IMR-90 (cell line): ENCODE measurements at regions of chr2 and their contacts with region 1.

Region 1: DNA sequence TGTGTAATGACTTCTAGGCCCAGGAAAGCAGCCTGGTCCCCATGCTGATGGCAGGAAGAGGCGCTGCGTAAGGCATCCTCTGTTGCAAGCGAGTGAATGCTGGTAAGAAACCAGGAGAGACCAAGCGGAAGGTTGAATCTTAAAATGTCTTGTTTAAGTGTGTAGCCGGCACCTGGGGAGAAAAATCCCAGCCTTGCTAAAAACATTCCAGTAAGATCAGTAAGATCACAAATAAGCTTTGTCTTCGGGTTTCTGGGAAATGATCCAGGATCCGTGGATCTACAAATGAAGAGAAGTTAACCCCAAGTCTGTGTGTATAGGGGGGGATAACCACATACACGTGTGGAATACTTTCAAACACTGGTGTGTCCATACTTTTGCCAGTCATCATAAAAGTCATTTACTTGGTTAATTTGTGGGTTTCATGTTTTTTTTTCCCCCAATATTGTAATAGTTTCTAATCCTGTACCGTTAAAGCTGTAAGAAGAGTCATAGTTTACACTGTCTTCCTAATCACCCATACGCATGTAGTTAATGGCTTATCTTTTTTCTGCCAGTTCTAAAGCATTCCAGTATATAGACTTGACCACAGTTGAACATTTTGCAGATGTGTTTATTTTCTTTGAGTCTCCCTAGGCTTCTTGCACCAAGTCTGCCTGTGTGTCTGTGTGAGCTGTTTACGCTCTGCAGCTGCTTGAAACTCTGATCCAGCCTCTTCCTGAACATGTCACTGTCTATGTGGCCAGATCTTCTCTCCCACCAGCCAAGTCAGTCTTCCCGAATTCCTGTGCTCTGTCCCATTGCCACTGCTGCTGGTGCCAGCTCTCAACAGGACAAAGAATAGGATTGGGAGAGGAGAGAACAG is 135.9 kb upstream of the ARL4C start:
- DNase-seq: peak; percentile 100
- ATAC-seq: peak; percentile 91
- H3K4me3 ChIP-seq: no peak overlapping the region
- H3K27ac ChIP-seq: peak overlapping the region; percentile 97
- H3K4me1 ChIP-seq: peaks cover 33% of the 10 kb centered on the region
- H3K27me3 ChIP-seq: no peaks in the 10 kb centered on the region
- CTCF ChIP-seq: no peak
- POLR2A ChIP-seq: peak; percentile 48; the same call in 1 of the 2 replicates
- RAD21 ChIP-seq: no peak; the same call in 1 of the 2 replicates

Region 2: DNA sequence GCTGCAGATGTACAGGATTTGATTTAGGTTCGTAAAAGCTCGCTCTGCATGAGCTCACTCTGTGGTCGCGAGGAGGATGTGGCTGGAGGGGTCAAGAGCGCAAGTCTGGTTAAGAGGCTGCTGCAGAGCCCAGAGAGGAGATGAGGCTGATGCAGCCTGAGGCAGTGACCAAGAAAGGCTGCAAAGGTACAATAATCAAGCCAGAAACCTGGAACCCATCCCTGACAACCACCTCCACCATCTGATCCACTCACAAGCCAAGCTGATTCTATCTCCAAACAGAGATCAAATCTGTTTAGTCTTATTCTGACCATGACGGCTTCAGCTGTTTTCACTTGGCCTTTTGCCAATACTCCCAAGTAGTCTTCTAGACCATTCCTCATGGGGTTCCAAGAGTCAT is 77.0 kb before region 1 on chr2:
- CTCF ChIA-PET with region 1: interaction called, 3 read pairs
- POLR2A ChIA-PET with region 1: no interaction called
- dilution Hi-C with region 1: no loop called
- in situ Hi-C with region 1: loop called (anchors 5 kb)
- intact Hi-C with region 1: no loop called
- DNase-seq: peak; percentile 48
- ATAC-seq: no peak
- H3K4me3 ChIP-seq: no peak overlapping the region
- H3K27ac ChIP-seq: no peak overlapping the region
- H3K4me1 ChIP-seq: peaks cover 7% of the 10 kb centered on the region
- H3K27me3 ChIP-seq: no peaks in the 10 kb centered on the region; the same call in 1 of the 2 replicates
- CTCF ChIP-seq: no peak
- POLR2A ChIP-seq: no peak
- RAD21 ChIP-seq: no peak

Region 3: DNA sequence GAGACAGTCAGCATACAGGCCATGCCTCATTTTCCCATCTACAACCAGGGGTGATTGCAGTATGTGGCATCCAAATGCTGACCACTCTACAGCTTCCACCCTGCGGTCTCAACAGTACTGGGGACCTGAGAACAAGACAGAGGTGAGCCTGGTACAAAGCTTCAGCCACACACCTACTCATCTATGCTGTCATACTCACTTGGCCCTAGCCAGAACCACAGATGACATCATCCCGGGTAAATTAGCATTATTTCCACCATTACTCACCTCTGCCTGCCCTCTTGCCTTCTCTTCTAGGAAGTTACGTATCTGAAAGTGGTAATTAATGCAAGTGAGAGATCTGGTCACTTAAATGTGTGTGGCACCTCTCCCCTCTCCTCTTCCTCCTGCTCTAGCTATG is 72.3 kb after region 1 on chr2:
- CTCF ChIA-PET with region 1: no interaction called
- POLR2A ChIA-PET with region 1: no interaction called
- dilution Hi-C with region 1: no loop called
- in situ Hi-C with region 1: no loop called
- intact Hi-C with region 1: no loop called
- DNase-seq: peak; percentile 85
- ATAC-seq: peak; percentile 63; the same call in 1 of the 2 replicates
- H3K4me3 ChIP-seq: no peak overlapping the region
- H3K27ac ChIP-seq: no peak overlapping the region
- H3K4me1 ChIP-seq: peaks cover 3% of the 10 kb centered on the region; the same call in 1 of the 2 replicates
- H3K27me3 ChIP-seq: no peaks in the 10 kb centered on the region
- CTCF ChIP-seq: no peak
- POLR2A ChIP-seq: no peak
- RAD21 ChIP-seq: no peak

Region 4: GRCh38 chr2:234763002-234763873 is 130.5 kb after region 1 on chr2:
- CTCF ChIA-PET with region 1: no interaction called
- POLR2A ChIA-PET with region 1: no interaction called
- dilution Hi-C with region 1: no loop called
- in situ Hi-C with region 1: no loop called
- intact Hi-C with region 1: loop called (anchors 2 kb)
- DNase-seq: peak; percentile 87
- ATAC-seq: peak; percentile 87
- H3K4me3 ChIP-seq: no peak overlapping the region
- H3K27ac ChIP-seq: peak overlapping the region; percentile 85
- H3K4me1 ChIP-seq: peaks cover 12% of the 10 kb centered on the region
- H3K27me3 ChIP-seq: no peaks in the 10 kb centered on the region
- CTCF ChIP-seq: no peak
- POLR2A ChIP-seq: no peak
- RAD21 ChIP-seq: 0 out of 2 replicates have a peak, but pooled peaks have one; percentile 10

Region 5: GRCh38 chr2:234881413-234882241 is 248.9 kb after region 1 on chr2:
- CTCF ChIA-PET with region 1: interaction called, 3 read pairs
- POLR2A ChIA-PET with region 1: no interaction called
- dilution Hi-C with region 1: no loop called
- in situ Hi-C with region 1: no loop called
- intact Hi-C with region 1: loop called (anchors 5 kb)
- DNase-seq: peak; percentile 97
- ATAC-seq: peak; percentile 88
- H3K4me3 ChIP-seq: peak overlapping the region; percentile 12; the same call in 1 of the 2 replicates
- H3K27ac ChIP-seq: peak overlapping the region; percentile 96
- H3K4me1 ChIP-seq: peaks cover 13% of the 10 kb centered on the region
- H3K27me3 ChIP-seq: no peaks in the 10 kb centered on the region
- CTCF ChIP-seq: peak; percentile 91
- POLR2A ChIP-seq: no peak
- RAD21 ChIP-seq: peak; percentile 64

Region 6: GRCh38 chr2:235106874-235107639 is 474.3 kb after region 1 on chr2:
- CTCF ChIA-PET with region 1: interaction called, 3 read pairs
- POLR2A ChIA-PET with region 1: no interaction called
- dilution Hi-C with region 1: no loop called
- in situ Hi-C with region 1: no loop called
- intact Hi-C with region 1: loop called (anchors 5 kb)
- DNase-seq: peak; percentile 76
- ATAC-seq: peak; percentile 97
- H3K4me3 ChIP-seq: no peak overlapping the region
- H3K27ac ChIP-seq: no peak overlapping the region
- H3K4me1 ChIP-seq: peaks cover 4% of the 10 kb centered on the region; the same call in 1 of the 2 replicates
- H3K27me3 ChIP-seq: peaks cover 3% of the 10 kb centered on the region
- CTCF ChIP-seq: peak; percentile 80
- POLR2A ChIP-seq: no peak
- RAD21 ChIP-seq: peak; percentile 89

Region 7: DNA sequence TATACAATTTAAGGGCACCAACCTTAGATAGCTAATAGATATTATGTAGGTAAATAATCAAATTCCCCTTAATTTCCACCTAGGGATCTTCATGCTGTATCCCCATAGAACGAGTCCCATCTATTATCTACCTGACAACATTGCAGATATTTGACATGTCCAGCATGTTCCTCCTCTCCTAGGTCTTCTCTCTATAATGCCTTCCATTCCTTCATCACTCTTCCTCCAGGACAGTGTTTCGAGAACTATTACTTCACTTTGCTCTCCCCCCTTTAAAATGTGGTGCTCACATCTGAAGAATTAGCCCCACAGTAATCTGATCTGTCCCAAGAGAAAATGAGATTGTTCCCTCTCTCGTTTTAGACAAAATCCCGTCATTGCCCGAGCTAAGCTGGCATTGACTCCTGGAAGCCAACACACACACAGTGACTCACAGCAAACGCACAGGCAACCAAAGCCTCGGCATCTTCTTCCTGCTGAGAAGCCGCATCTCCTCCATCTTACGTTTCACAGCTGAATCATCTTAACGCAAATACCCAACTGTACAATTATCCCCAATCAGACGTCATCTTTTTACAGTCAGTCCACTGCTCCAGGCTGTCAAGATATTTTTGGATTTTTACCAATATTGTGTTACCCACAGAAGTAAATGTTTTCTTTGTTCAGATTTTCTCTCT is 698.2 kb after region 1 on chr2:
- CTCF ChIA-PET with region 1: no interaction called
- POLR2A ChIA-PET with region 1: no interaction called
- dilution Hi-C with region 1: no loop called
- in situ Hi-C with region 1: no loop called
- intact Hi-C with region 1: no loop called
- DNase-seq: peak; percentile 94
- ATAC-seq: peak; percentile 71
- H3K4me3 ChIP-seq: no peak overlapping the region
- H3K27ac ChIP-seq: no peak overlapping the region
- H3K4me1 ChIP-seq: peaks cover 7% of the 10 kb centered on the region
- H3K27me3 ChIP-seq: peaks cover 18% of the 10 kb centered on the region
- CTCF ChIP-seq: no peak
- POLR2A ChIP-seq: no peak
- RAD21 ChIP-seq: no peak